ENCODE measurements at regions of chr6 and their contacts with region 1.

Region 1: GRCh38 chr6:26156076-26156849 is 69.0 kb downstream of the HFE start:
- DNase-seq: peak; percentile 94
- H3K4me3 ChIP-seq: peak overlapping the region; percentile 62 to 80 (median 74)
- H3K27ac ChIP-seq: peak overlapping the region; percentile 88
- H3K4me1 ChIP-seq: peaks cover 31% of the 10 kb centered on the region
- H3K27me3 ChIP-seq: no peaks in the 10 kb centered on the region
- CTCF ChIP-seq: peak in 1 of 2 donors; percentile 12

Region 2: DNA sequence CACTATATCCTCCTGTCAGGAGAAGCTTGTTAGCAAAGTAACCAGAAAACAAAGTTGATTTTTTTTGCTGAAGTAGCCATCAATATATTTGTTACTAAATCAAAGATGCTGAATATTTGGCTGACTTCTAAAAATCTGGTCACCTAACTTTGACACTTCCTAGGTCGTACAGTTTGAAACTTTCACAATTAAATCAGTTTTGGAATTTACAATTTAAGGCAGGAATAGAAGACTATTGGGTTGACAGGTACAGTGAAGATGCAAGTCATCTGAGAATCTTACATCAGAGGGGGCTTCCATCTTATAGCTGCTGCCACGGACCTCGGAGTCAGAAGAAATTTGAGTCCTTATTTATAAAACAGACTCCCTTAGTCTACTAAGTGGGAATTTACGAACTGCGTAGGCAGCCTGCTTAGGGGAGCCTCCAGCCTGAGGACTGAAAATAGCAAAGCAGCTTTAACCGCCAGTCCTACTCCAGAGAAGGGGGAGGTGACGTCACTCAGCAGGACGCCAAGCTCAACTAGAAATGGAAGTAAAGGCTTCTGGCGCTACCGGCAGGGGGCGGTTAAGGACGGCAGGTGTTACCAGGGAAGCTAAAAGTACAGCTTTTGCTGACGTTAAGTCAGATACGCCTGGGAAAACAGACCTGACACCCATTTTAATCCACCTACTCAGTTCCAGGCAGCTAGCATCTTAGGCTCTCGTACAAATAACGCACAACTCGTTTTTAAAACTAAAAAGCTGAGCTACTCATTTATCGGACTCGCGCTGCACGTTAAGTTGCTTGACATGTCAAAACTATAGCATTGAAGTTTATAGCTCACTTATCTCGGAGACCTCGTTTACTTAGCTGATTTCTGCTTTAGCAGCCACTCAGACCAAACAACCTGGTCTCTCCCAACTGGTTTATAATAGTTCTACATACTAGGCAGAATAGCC is 130.1 kb before region 1 on chr6:
- CTCF ChIA-PET with region 1: no interaction called
- dilution Hi-C with region 1: no loop called
- in situ Hi-C with region 1: no loop called
- intact Hi-C with region 1: loop called (anchors 2 kb)
- DNase-seq: peak; percentile 92
- H3K4me3 ChIP-seq: peak overlapping the region; percentile 41 to 60 (median 59)
- H3K27ac ChIP-seq: peak overlapping the region; percentile 89
- H3K4me1 ChIP-seq: peaks cover 30% of the 10 kb centered on the region
- H3K27me3 ChIP-seq: no peaks in the 10 kb centered on the region
- CTCF ChIP-seq: peak; percentile 91 to 95

Region 3: GRCh38 chr6:26054857-26055669 is 101.2 kb before region 1 on chr6:
- CTCF ChIA-PET with region 1: no interaction called
- dilution Hi-C with region 1: no loop called
- in situ Hi-C with region 1: no loop called
- intact Hi-C with region 1: loop called (anchors 2 kb)
- DNase-seq: peak; percentile 92
- H3K4me3 ChIP-seq: peak overlapping the region; percentile 61 to 82 (median 62)
- H3K27ac ChIP-seq: peak overlapping the region; percentile 91
- H3K4me1 ChIP-seq: peaks cover 9% of the 10 kb centered on the region
- H3K27me3 ChIP-seq: no peaks in the 10 kb centered on the region
- CTCF ChIP-seq: peak in 1 of 2 donors; percentile 19

Region 4: GRCh38 chr6:26122793-26123674 is 33.2 kb before region 1 on chr6:
- CTCF ChIA-PET with region 1: no interaction called
- dilution Hi-C with region 1: no loop called
- in situ Hi-C with region 1: loop called in 1 of 2 experiments (anchors 5 kb)
- intact Hi-C with region 1: loop called (anchors 1 kb)
- DNase-seq: peak; percentile 97
- H3K4me3 ChIP-seq: peak overlapping the region; percentile 51 to 62 (median 53)
- H3K27ac ChIP-seq: peak overlapping the region; percentile 92
- H3K4me1 ChIP-seq: peaks cover 28% of the 10 kb centered on the region
- H3K27me3 ChIP-seq: no peaks in the 10 kb centered on the region
- CTCF ChIP-seq: no peak

Region 5: DNA sequence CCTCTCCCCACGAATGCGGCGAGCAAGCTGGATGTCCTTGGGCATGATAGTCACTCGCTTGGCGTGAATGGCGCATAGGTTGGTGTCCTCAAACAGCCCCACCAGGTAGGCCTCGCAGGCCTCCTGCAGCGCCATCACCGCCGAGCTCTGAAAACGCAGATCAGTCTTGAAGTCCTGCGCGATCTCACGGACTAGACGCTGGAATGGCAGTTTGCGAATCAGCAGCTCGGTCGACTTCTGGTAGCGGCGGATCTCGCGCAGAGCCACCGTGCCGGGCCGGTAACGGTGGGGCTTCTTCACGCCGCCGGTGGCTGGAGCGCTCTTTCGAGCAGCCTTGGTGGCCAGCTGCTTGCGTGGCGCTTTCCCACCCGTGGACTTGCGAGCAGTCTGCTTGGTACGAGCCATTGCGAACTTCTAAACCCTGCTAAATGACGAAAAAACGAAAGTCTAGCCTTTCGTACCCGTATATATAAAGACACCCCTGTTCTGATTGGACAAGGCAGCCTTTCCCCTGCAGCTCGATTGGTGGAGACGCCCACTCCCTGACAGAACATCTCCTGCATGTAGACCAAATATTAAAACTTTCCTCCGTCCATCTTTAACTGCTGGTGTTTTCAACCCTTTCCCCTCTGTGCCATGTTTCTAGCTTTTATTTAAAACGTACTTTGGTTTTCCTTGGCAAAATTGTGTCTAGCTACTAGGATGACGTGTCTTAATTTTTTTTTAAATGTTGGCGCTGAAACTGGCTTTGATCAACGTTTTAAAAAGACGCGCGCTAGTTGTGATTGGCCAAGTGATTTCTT is 40.8 kb after region 1 on chr6:
- CTCF ChIA-PET with region 1: no interaction called
- dilution Hi-C with region 1: loop called (anchors 5 kb)
- in situ Hi-C with region 1: no loop called
- intact Hi-C with region 1: loop called (anchors 1 kb)
- DNase-seq: peak; percentile 89
- H3K4me3 ChIP-seq: peak overlapping the region; percentile 69 to 90 (median 87)
- H3K27ac ChIP-seq: peak overlapping the region; percentile 87
- H3K4me1 ChIP-seq: peaks cover 8% of the 10 kb centered on the region
- H3K27me3 ChIP-seq: no peaks in the 10 kb centered on the region
- CTCF ChIP-seq: no peak

Region 6: DNA sequence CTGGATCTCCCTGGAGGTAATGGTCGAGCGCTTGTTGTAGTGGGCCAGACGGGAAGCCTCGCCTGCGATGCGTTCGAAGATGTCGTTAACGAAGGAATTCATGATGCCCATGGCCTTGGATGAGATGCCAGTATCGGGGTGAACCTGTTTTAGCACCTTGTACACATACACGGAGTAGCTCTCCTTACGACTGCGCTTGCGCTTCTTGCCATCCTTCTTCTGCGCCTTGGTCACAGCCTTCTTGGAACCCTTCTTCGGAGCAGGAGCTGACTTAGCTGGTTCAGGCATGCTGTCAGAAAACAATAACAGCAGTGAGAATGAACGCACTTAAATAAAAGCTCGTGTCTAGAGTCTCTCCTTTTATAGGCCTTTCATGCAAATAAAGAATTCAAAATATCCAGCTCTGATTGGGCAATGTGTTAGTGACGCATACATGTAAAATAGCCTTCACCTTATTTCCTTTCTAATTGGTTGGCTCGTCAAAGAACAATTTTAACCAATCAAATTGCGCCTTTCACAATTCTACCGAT is 60.2 kb after region 1 on chr6:
- CTCF ChIA-PET with region 1: no interaction called
- dilution Hi-C with region 1: no loop called
- in situ Hi-C with region 1: no loop called
- intact Hi-C with region 1: loop called (anchors 1 kb)
- DNase-seq: peak; percentile 98
- H3K4me3 ChIP-seq: peak overlapping the region; percentile 57 to 68 (median 65)
- H3K27ac ChIP-seq: peak overlapping the region; percentile 86
- H3K4me1 ChIP-seq: peaks cover 12% of the 10 kb centered on the region
- H3K27me3 ChIP-seq: no peaks in the 10 kb centered on the region
- CTCF ChIP-seq: no peak

Measured in mammary epithelial cell (primary cell).